ENCODE measurements at regions of chr1 and their contacts with region 1.

Region 1: DNA sequence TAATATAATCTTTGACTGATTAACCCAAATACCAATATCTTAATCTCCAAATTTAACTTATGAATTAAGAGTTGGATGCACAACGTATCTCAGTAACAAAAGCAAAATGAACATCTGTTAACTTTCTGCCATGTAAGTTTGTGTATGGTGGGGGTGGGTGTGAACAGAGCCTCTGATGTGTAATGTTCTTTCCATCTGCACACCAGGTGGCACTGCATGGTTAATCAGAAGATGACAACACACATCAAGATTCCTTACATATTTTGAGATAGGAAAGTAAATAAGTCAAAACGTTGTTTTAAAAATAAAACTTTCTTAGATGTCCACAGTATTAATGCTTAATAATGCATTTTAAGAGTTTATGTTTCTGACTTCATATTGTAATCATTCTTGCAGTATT is 251.9 kb downstream of the DPYD start:
- DNase-seq: no peak
- H3K4me3 ChIP-seq: no peak overlapping the region
- H3K4me1 ChIP-seq: no peaks in the 10 kb centered on the region
- H3K27me3 ChIP-seq: no peaks in the 10 kb centered on the region

Region 2: GRCh38 chr1:97758541-97759057 is 89.7 kb after region 1 on chr1:
- in situ Hi-C with region 1: loop called (anchors 25 kb)
- DNase-seq: no peak
- H3K4me3 ChIP-seq: no peak overlapping the region
- H3K4me1 ChIP-seq: no peaks in the 10 kb centered on the region
- H3K27me3 ChIP-seq: no peaks in the 10 kb centered on the region